H1 (cell line): ENCODE measurements at regions of chr2 and their contacts with region 1.

Region 1: GRCh38 chr2:15714609-15715008 is 122.9 kb downstream of the DDX1 start:
- DNase-seq: no peak
- H3K4me3 ChIP-seq: no peak overlapping the region
- H3K27ac ChIP-seq: no peak overlapping the region
- H3K4me1 ChIP-seq: peaks cover 0 to under 1% (median 0%) of the 10 kb centered on the region in 4 experiments; a peak in 1 of 7 replicates
- H3K27me3 ChIP-seq: no peaks in the 10 kb centered on the region
- CTCF ChIP-seq: no peak
- EP300 ChIP-seq: no peak
- POLR2A ChIP-seq: no peak
- RAD21 ChIP-seq: no peak

Region 2: DNA sequence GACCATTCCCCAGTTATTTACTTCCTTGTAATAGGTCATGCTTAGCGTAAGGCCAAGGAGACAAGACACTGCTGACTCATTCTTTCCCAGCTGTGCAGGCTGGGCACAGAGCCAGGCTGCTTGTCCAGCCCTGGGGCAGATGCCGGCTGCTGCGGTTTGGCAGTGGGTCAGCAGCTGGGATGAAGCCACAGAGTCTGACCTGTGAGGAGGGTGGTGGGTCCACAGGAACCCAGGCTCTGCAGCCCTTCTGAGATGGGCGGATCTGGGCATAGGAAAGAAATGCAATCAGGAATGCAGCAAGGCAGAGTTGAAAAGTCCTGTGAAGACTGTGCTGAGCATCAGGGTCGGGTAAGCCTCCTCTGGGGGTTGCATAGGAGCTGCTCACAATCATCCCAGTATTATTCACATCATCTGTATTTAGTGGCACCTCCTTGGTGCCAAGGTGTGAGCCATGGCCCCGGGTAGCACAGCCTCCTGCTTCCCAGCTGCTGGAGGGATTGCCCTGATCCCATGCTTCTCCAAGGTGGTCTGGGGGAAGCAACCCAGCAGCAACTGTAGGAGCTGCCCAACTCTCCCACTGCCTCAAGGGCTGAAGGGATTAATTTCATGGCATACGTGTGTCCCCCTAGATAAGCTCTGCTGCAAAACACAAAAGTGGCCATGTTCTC is 16.1 kb after region 1 on chr2:
- CTCF ChIA-PET with region 1: interaction called, 12 read pairs
- POLR2A ChIA-PET with region 1: no interaction called
- DNase-seq: no peak
- H3K4me3 ChIP-seq: no peak overlapping the region
- H3K27ac ChIP-seq: no peak overlapping the region
- H3K4me1 ChIP-seq: peaks cover 0 to under 1% (median 0%) of the 10 kb centered on the region in 4 experiments; a peak in 1 of 7 replicates
- H3K27me3 ChIP-seq: no peaks in the 10 kb centered on the region
- CTCF ChIP-seq: no peak
- EP300 ChIP-seq: no peak
- POLR2A ChIP-seq: no peak
- RAD21 ChIP-seq: no peak

Region 3: DNA sequence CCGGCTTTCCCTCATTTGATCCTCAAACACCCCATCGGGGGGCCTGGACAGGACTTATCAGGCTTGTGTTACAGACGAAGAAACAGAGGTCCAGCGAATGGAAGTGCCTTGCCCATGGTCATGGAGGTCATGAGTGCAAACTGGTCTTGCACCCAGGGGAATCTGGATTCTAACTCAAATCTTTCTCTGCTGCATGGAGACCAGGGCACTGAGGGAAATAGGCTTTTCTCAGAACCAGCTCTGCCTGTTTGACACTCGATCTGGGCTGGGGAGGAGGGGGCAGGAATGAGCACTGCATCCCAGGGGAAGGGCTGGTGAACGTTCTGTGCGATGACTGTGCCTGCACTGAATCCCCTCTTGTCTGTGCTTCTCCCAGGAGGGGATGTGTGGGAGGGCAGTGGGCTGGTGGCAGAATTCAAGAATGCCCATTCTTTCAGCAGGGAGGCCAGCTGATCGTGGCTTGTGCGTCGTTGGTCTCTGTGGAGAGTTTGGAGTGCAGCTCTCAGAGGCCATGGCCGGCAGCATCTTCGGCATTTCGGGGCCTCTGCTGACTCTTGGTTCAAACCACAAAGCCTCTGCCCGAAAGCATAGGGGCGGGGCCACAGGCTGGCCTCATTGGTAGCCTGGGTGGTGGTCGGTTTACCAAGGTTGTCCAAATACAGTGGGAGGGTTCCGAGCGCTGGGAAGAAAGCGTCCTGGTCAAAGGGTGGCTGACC is 48.7 kb after region 1 on chr2:
- CTCF ChIA-PET with region 1: no interaction called
- POLR2A ChIA-PET with region 1: no interaction called
- DNase-seq: peak in 1 of 2 experiments; percentile 33
- H3K4me3 ChIP-seq: no peak overlapping the region
- H3K27ac ChIP-seq: no peak overlapping the region
- H3K4me1 ChIP-seq: peaks cover 0 to 10% (median 1%) of the 10 kb centered on the region in 4 experiments; a peak in 3 of 7 replicates
- H3K27me3 ChIP-seq: no peaks in the 10 kb centered on the region
- CTCF ChIP-seq: no peak
- EP300 ChIP-seq: no peak
- POLR2A ChIP-seq: no peak
- RAD21 ChIP-seq: no peak